ENCODE measurements at regions of chr17 and their contacts with region 1.

Region 1: GRCh38 chr17:51000835-51001638 is 119.6 kb downstream of the SPAG9 start:
- DNase-seq: peak; percentile 62 to 78
- ATAC-seq: peak; percentile 86 to 91; a peak in 5 of 6 replicates
- H3K4me3 ChIP-seq: no peak overlapping the region
- H3K27ac ChIP-seq: no peak overlapping the region
- H3K4me1 ChIP-seq: no peaks in the 10 kb centered on the region
- CTCF ChIP-seq: peak; percentile 84
- EP300 ChIP-seq: no peak
- POLR2A ChIP-seq: no peak
- RAD21 ChIP-seq: peak; percentile 86 to 89

Region 2: GRCh38 chr17:50976951-50977472 is 24.0 kb before region 1 on chr17:
- CTCF ChIA-PET with region 1: interaction called, 24 read pairs
- POLR2A ChIA-PET with region 1: no interaction called
- DNase-seq: no peak
- ATAC-seq: no peak
- H3K4me3 ChIP-seq: no peak overlapping the region
- H3K27ac ChIP-seq: no peak overlapping the region
- H3K4me1 ChIP-seq: no peaks in the 10 kb centered on the region
- CTCF ChIP-seq: no peak
- EP300 ChIP-seq: no peak
- POLR2A ChIP-seq: no peak
- RAD21 ChIP-seq: no peak

Region 3: GRCh38 chr17:51015145-51015558 is 14.1 kb after region 1 on chr17:
- CTCF ChIA-PET with region 1: interaction called, 42 read pairs
- POLR2A ChIA-PET with region 1: no interaction called
- DNase-seq: no peak
- ATAC-seq: no peak; a peak in 1 of 6 replicates
- H3K4me3 ChIP-seq: no peak overlapping the region
- H3K27ac ChIP-seq: no peak overlapping the region
- H3K4me1 ChIP-seq: no peaks in the 10 kb centered on the region
- CTCF ChIP-seq: no peak
- EP300 ChIP-seq: no peak
- POLR2A ChIP-seq: no peak
- RAD21 ChIP-seq: no peak

Region 4: DNA sequence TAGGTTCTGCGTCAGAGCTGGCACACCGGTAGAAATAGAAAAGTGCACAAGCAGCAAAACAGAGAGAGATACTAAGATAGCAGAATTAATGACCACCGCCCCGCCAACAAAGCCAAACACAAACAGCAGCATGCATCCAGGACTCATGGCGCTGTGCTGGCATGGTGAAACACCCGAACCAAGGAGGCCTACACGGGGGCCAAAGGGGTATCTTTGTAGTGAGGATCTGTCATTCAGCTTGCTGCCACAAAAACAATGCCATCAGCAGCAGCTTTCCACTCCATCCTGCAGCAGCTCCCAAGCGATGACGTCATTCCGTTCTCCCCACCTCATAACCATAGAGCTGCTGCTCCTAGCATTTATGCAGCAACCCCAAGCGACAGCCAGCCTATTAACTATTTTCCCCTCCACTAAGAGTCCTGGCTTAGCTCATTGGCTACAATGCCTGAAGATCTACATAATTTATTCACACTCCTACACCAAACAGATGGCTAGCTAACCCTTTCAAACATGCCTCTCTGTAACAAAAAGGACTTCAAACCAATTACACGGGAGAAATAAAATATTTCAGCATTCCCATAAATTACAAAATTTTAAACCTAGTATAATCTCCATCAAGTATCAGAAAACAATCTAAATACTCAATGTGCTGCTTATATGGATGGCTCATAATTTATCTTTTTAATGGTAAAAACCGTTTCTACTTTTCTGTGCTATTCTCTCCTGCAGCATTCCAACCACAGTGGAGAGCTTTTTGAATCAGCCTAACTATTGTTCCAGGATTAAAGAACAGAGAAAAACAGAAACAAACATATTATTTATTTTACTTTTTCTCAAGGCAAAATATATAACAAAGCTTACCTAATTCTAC is 45.7 kb after region 1 on chr17:
- CTCF ChIA-PET with region 1: interaction called, 11 read pairs
- POLR2A ChIA-PET with region 1: interaction called, 4 read pairs
- DNase-seq: peak in 1 of 2 experiments; percentile 26
- ATAC-seq: peak; percentile 43 to 75; a peak in 5 of 6 replicates
- H3K4me3 ChIP-seq: no peak overlapping the region
- H3K27ac ChIP-seq: no peak overlapping the region
- H3K4me1 ChIP-seq: peaks cover 9% of the 10 kb centered on the region; the same call in 2 of the 3 replicates
- CTCF ChIP-seq: no peak
- EP300 ChIP-seq: no peak
- POLR2A ChIP-seq: no peak
- RAD21 ChIP-seq: no peak

Region 5: DNA sequence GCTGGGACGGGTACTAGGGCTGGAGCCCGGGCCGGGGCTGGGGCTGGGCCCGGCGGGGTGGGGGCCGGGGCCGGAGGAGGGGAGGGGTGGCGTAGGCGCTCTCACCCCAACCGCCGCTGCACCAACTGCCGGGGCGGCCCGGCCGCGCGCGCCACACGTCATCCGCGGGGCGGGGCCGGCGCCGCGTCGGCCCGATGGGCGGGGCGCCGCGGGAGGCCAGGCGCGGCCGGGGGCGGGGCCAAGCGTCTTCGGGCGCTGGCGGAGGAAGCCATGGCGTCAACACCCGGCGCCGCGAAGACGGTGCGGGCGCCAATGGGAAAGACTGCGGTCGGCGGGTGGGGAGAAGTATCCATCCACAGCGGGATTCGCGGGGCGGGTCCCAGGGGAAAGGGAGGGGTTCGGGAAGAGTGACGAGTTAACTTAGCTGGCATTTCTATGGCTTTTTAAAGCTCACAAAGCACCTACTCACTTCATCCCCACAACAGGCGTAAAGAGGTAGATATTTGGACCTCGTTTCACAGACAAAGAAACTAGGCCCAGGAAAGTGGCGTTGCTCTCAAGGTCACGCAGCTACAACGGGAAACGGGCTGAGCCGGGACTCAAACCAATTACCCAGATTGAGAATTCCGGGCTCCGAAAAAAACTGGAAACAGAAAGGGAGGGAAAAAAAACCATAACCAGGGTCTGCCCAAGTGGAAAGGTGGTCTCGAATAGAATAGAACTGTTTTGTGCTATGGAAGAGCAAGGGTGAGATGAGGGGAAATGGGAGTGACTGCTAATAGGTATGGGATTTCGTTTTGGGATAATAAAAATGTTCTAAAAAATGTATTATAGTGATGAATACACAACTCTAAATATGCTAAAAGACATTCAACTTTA is 119.9 kb after region 1 on chr17 and contains the start of gene SPAG9:
- CTCF ChIA-PET with region 1: interaction called, 10 read pairs
- POLR2A ChIA-PET with region 1: interaction called, 3 read pairs
- DNase-seq: peak; percentile 97
- ATAC-seq: peak; percentile 80 to 82
- H3K4me3 ChIP-seq: peak within 1 kb of the TSS; percentile 77
- H3K27ac ChIP-seq: peak within 1 kb of the TSS; percentile 91 to 92
- H3K4me1 ChIP-seq: peaks cover 46% of the 10 kb centered on the region
- CTCF ChIP-seq: no peak
- EP300 ChIP-seq: no peak
- POLR2A ChIP-seq: peak; percentile 46
- RAD21 ChIP-seq: peak; percentile 4 to 5; a peak in 1 of 5 replicates
- polyA plus RNA-seq, gene SPAG9: 69.6 and 71.1 TPM in 2 replicates

Region 6: GRCh38 chr17:51142597-51142996 is 141.6 kb after region 1 on chr17:
- CTCF ChIA-PET with region 1: interaction called, 13 read pairs
- POLR2A ChIA-PET with region 1: no interaction called
- DNase-seq: no peak
- ATAC-seq: no peak
- H3K4me3 ChIP-seq: no peak overlapping the region
- H3K27ac ChIP-seq: no peak overlapping the region
- H3K4me1 ChIP-seq: peaks cover 8% of the 10 kb centered on the region; the same call in 1 of the 3 replicates
- CTCF ChIP-seq: no peak
- EP300 ChIP-seq: no peak
- POLR2A ChIP-seq: no peak
- RAD21 ChIP-seq: no peak

Region 7: GRCh38 chr17:51166197-51166986 is 165.4 kb after region 1 on chr17 and contains the start of gene NME2:
- CTCF ChIA-PET with region 1: interaction called, 13 read pairs
- POLR2A ChIA-PET with region 1: no interaction called
- DNase-seq: peak; percentile 93 to 97
- ATAC-seq: peak; percentile 85 to 93
- H3K4me3 ChIP-seq: peak within 1 kb of the TSS; percentile 88
- H3K27ac ChIP-seq: peak within 1 kb of the TSS; percentile 94
- H3K4me1 ChIP-seq: peaks cover 21% of the 10 kb centered on the region
- CTCF ChIP-seq: no peak
- EP300 ChIP-seq: no peak
- POLR2A ChIP-seq: peak; percentile 74
- RAD21 ChIP-seq: no peak
- polyA plus RNA-seq, gene NME2: 1,425 and 1,432 TPM in 2 replicates

Measured in A549 (cell line).